IMR-90 (cell line): ENCODE measurements at regions of chr9 and their contacts with region 1.

Region 1: GRCh38 chr9:98263482-98264357 is 8.3 kb upstream of the TBC1D2 start:
- DNase-seq: peak; percentile 84
- ATAC-seq: peak; percentile 100
- H3K4me3 ChIP-seq: no peak overlapping the region
- H3K27ac ChIP-seq: no peak overlapping the region
- H3K4me1 ChIP-seq: peaks cover 2% of the 10 kb centered on the region
- H3K27me3 ChIP-seq: no peaks in the 10 kb centered on the region
- CTCF ChIP-seq: peak; percentile 97
- POLR2A ChIP-seq: no peak; the same call in 1 of the 2 replicates
- RAD21 ChIP-seq: peak; percentile 100

Region 2: DNA sequence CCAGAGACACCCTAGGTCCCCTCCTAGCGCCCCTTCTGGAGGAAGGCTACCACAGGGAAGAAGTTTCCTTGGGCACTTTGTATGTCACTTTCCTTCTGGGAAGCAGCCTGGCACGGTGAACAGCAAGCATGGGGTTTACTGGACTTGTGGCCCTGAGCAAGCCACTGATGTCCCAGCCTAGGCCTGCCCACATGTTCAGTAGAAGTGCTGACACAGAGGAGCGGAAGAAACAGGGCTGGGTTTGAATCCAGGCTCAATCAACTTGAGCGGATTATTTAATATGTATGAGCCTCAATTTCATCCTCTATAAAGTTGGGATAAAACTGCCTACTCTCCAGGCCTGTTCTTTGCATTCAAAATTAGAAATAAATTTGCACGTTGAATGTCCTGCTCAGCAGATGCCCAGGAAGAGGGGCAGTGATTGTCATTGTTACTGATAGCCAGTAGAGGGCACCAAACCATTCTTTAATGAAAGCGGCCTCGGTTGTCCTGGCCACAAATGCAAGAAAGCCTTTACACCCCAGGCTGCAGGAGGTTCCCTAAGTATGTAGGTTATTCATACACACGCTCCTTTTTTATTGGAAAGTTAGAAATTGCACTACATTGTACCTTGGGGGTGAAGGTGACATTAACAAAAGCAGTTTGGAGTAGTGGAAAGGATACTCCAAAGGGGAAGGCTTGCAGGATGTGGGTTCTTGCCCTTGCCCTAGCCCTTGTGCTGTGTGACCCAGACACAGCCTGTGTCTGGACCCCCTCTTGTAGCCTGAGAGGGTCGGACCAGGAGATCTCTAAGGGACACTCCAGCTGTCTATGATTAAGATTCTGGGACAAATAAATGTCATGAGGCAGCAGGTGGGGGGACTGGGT is 553.1 kb before region 1 on chr9:
- CTCF ChIA-PET with region 1: no interaction called
- POLR2A ChIA-PET with region 1: no interaction called
- dilution Hi-C with region 1: no loop called
- in situ Hi-C with region 1: no loop called
- intact Hi-C with region 1: loop called (anchors 10 kb)
- DNase-seq: peak; percentile 66
- ATAC-seq: peak; percentile 96
- H3K4me3 ChIP-seq: no peak overlapping the region
- H3K27ac ChIP-seq: no peak overlapping the region
- H3K4me1 ChIP-seq: no peaks in the 10 kb centered on the region; the same call in 1 of the 2 replicates
- H3K27me3 ChIP-seq: peaks cover 12% of the 10 kb centered on the region
- CTCF ChIP-seq: peak; percentile 86
- POLR2A ChIP-seq: no peak
- RAD21 ChIP-seq: peak; percentile 89

Region 3: DNA sequence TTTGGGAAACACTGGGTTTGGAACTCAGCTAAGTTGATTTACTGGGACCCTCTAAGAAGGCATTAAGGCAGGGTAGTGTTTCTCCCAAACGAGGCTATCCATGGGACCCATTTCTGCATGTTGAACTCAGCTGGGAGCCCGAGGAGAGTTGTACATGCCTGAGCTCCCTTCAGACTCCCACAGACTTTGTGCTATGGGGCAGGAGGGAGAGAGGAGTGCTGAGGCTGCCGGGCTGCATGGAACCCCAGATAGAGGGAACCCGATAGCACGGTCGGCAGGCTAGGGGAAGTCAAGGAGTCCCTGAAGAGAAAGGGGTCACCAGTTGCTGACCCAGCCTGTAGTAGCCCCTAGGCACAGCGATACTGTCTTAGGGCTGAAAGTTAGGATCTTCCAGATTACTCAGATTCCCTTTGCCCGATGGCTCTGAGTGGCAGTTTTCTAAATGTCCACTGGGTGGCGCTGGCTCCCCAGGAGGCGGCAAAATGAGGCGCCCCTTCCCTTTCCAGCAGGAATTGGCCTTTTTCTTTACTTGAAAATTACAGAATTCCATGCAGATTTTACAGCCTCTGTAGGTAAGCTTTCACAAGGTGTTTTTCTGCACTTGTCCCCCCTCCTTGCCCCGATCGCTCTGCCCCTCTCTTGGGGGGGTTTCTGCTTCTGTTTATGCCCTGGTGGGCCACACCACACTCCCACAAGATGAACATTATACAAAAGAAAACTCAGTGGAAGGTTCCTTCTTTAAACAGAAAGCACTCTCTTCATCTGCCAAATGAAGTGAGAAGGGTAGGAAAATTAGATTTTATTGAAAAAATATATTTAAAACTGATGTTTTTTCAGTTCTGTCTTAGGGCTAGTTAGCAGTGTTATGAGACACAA is 189.4 kb before region 1 on chr9:
- CTCF ChIA-PET with region 1: no interaction called
- POLR2A ChIA-PET with region 1: no interaction called
- dilution Hi-C with region 1: no loop called
- in situ Hi-C with region 1: loop called (anchors 5 kb)
- intact Hi-C with region 1: loop called (anchors 1 kb)
- DNase-seq: peak; percentile 59
- ATAC-seq: peak; percentile 91
- H3K4me3 ChIP-seq: no peak overlapping the region
- H3K27ac ChIP-seq: 0 out of 2 replicates have a peak overlapping the region, but pooled peaks have one; percentile 0
- H3K4me1 ChIP-seq: peaks cover 5% of the 10 kb centered on the region
- H3K27me3 ChIP-seq: no peaks in the 10 kb centered on the region
- CTCF ChIP-seq: peak; percentile 94
- POLR2A ChIP-seq: no peak
- RAD21 ChIP-seq: peak; percentile 85

Region 4: DNA sequence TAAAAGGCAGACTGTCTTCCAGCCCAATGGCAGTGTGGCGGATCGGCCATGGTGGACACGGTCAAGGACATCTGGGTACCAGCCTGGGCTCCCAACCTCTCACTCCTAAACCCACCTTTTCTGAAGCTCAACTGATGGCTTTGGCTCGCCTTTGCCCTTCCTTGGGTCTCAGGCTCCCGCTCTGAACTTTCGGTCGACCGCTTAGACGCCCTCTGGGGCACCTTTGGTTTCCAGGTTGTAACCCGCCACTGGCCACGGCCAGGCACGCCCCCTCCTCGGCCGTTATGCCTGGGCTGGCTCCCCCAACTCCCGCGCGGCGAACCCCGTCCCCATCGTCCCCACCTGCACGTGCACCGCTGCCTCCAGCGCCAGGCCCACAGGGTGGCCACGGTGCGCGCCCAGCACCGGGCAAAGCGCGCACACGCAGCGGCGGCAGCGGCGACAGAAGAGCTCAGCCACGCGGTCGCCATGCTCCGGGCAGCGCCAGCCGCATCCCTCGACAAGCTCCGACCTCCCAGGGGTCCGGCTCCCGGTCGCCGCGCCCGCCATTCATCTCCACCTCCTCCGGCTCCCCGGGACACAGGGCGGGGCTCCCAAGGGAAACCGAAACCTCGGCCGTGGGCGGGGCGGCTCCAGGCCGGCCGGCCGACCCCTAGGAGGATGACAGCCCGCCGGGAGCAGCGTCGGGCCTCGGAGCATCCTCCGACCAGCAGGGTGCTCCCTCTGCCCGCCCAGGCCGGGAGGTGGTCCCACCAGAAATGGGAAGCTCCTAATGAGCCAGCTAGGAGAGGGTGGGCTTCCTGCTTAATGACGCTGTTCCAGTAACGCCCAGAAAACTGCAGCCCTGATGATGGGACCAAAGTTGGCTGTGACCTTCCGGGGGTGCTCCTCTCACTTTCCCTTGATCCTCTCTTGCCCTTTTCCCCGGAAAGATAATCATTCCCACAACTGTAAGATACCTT is 144.8 kb before region 1 on chr9 and contains the start of gene TRIM14:
- CTCF ChIA-PET with region 1: interaction called, 3 read pairs
- POLR2A ChIA-PET with region 1: no interaction called
- dilution Hi-C with region 1: no loop called
- in situ Hi-C with region 1: no loop called
- intact Hi-C with region 1: loop called (anchors 2 kb)
- DNase-seq: peak; percentile 55
- ATAC-seq: peak; percentile 98
- H3K4me3 ChIP-seq: peak within 1 kb of the TSS; percentile 70
- H3K27ac ChIP-seq: peak within 1 kb of the TSS; percentile 10
- H3K4me1 ChIP-seq: no peaks in the 10 kb centered on the region
- H3K27me3 ChIP-seq: no peaks in the 10 kb centered on the region
- CTCF ChIP-seq: peak; percentile 46
- POLR2A ChIP-seq: no peak
- RAD21 ChIP-seq: peak; percentile 39
- total RNA-seq, gene TRIM14: 3.0 and 3.1 TPM in 2 replicates